Activated CD8-positive, alpha-beta memory T cell treated with anti-CD3 and anti-CD28 coated beads, Interleukin-2, amount 10 ng/mL, durations not matched to agents 7 days and 5 days (primary cell): ENCODE measurements at regions of chr2 and their contacts with region 1.

Region 1: GRCh38 chr2:161946489-161947107 is 127.4 kb downstream of the DPP4 start:
- DNase-seq: no peak
- ATAC-seq: peak; percentile 64
- H3K4me3 Mint-ChIP-seq: no peak overlapping the region
- H3K27ac Mint-ChIP-seq: peak overlapping the region; percentile 49
- H3K4me1 Mint-ChIP-seq: peaks cover 43% of the 10 kb centered on the region
- H3K27me3 Mint-ChIP-seq: peaks cover 8% of the 10 kb centered on the region

Region 2: DNA sequence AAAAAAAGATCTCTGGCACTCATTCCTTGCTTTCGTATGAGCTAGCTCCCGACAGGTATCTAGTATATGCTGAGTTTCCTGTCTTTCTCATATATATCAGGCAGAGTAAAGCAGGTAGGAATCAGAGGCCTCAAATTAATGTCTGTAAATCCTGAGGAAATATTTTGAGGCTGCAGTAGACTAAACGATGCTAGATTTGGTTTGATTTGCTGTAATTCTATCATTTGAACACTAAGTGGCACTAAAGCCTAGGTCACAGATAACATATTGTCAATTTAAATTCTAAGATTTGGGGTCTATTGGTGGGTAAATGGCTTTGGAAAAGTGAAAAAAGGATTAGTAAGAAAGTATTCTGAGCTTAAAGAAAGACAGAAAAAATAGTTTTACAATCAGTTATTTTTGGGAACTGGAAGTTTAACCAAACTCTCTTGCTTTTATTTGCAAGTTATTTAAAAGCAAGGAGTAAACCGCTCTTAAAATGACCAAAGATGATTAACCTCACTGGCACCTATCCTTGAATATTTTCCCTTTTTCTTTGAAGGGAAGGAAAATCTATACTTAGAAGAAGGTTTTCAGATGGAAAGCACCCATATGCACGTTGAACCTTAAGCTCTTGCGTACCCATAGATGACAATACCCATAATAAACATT is 360.0 kb before region 1 on chr2:
- CTCF ChIA-PET with region 1: interaction called, 36 read pairs
- DNase-seq: no peak
- ATAC-seq: no peak
- H3K4me3 Mint-ChIP-seq: no peak overlapping the region
- H3K27ac Mint-ChIP-seq: no peak overlapping the region
- H3K4me1 Mint-ChIP-seq: no peaks in the 10 kb centered on the region
- H3K27me3 Mint-ChIP-seq: peaks cover 20% of the 10 kb centered on the region